Activated T-helper 2 cell treated with anti-CD3 and anti-CD28 coated beads, Interferon-gamma antibody, Interleukin-2, Interleukin-4, amounts not matched to agents 10 μg/mL and 5 μg/mL and 100 μg/mL, durations not matched to agents 14 hours and 24 hours and 36 hours (primary cell): ENCODE measurements at regions of chr2 and their contacts with region 1.

Region 1: GRCh38 chr2:30421604-30422443 is 25.2 kb upstream of the LCLAT1 start:
- DNase-seq: no peak
- H3K4me3 Mint-ChIP-seq: peak overlapping the region; percentile 63
- H3K27ac Mint-ChIP-seq: peak overlapping the region; percentile 86
- H3K4me1 Mint-ChIP-seq: peaks cover 29% of the 10 kb centered on the region
- H3K27me3 Mint-ChIP-seq: no peaks in the 10 kb centered on the region

Region 2: GRCh38 chr2:30225131-30225762 is 196.6 kb before region 1 on chr2:
- intact Hi-C with region 1: loop called (anchors 1 kb)
- DNase-seq: peak; percentile 48
- H3K4me3 Mint-ChIP-seq: peak overlapping the region; percentile 81
- H3K27ac Mint-ChIP-seq: peak overlapping the region; percentile 96
- H3K4me1 Mint-ChIP-seq: peaks cover 46% of the 10 kb centered on the region
- H3K27me3 Mint-ChIP-seq: peaks cover 2% of the 10 kb centered on the region

Region 3: GRCh38 chr2:30266051-30266621 is 155.7 kb before region 1 on chr2:
- intact Hi-C with region 1: loop called (anchors 1 kb)
- DNase-seq: peak; percentile 40
- H3K4me3 Mint-ChIP-seq: peak overlapping the region; percentile 84
- H3K27ac Mint-ChIP-seq: peak overlapping the region; percentile 98
- H3K4me1 Mint-ChIP-seq: peaks cover 71% of the 10 kb centered on the region
- H3K27me3 Mint-ChIP-seq: no peaks in the 10 kb centered on the region

Region 4: GRCh38 chr2:30300456-30301221 is 121.2 kb before region 1 on chr2:
- intact Hi-C with region 1: no loop called
- DNase-seq: no peak
- H3K4me3 Mint-ChIP-seq: no peak overlapping the region
- H3K27ac Mint-ChIP-seq: no peak overlapping the region
- H3K4me1 Mint-ChIP-seq: peaks cover 9% of the 10 kb centered on the region
- H3K27me3 Mint-ChIP-seq: no peaks in the 10 kb centered on the region

Region 5: DNA sequence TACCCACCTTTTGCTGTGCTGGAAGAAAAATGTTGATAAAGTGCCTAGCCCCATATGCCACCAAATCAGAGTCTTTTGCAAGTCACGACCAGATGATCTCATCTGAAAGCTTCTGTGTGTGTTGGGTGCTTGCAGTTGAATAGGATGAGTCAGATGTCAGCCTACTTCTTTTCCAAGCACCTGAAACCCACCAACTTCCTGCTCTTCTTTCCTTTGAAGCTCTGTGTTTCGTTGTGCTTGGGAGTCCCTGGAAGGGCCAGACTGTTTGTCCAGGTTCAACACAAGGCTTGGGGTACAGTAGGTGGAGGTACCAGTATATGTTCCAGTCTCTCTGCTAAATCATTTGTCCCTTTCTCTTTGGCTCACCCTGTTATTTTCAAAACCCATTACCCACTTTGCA is 11.6 kb before region 1 on chr2:
- intact Hi-C with region 1: loop called (anchors 1 kb)
- DNase-seq: no peak
- H3K4me3 Mint-ChIP-seq: no peak overlapping the region
- H3K27ac Mint-ChIP-seq: peak overlapping the region; percentile 48
- H3K4me1 Mint-ChIP-seq: peaks cover 28% of the 10 kb centered on the region
- H3K27me3 Mint-ChIP-seq: no peaks in the 10 kb centered on the region

Region 6: DNA sequence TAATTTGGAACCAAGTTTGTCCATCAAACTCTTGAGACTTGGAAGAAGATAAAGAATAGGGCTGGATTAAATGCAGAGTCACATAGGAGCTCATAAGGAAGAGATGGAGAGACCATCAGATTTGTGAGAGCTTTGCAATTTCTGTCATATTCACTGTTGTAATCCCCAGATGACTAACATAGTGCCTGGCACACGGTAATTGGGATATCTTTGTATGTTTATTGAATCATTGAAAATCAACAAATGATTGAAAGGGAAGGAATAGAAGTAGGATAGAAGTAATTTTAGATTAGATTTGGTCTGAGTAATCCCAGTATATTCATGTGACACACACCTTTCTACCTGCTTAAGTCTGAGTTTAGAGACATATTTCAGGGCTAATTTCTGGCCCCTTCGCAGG is 100.6 kb after region 1 on chr2:
- intact Hi-C with region 1: no loop called
- DNase-seq: no peak
- H3K4me3 Mint-ChIP-seq: no peak overlapping the region
- H3K27ac Mint-ChIP-seq: no peak overlapping the region
- H3K4me1 Mint-ChIP-seq: no peaks in the 10 kb centered on the region
- H3K27me3 Mint-ChIP-seq: no peaks in the 10 kb centered on the region